CD4-positive, alpha-beta memory T cell (primary cell): ENCODE measurements at regions of chr19 and their contacts with region 1.

Region 1: DNA sequence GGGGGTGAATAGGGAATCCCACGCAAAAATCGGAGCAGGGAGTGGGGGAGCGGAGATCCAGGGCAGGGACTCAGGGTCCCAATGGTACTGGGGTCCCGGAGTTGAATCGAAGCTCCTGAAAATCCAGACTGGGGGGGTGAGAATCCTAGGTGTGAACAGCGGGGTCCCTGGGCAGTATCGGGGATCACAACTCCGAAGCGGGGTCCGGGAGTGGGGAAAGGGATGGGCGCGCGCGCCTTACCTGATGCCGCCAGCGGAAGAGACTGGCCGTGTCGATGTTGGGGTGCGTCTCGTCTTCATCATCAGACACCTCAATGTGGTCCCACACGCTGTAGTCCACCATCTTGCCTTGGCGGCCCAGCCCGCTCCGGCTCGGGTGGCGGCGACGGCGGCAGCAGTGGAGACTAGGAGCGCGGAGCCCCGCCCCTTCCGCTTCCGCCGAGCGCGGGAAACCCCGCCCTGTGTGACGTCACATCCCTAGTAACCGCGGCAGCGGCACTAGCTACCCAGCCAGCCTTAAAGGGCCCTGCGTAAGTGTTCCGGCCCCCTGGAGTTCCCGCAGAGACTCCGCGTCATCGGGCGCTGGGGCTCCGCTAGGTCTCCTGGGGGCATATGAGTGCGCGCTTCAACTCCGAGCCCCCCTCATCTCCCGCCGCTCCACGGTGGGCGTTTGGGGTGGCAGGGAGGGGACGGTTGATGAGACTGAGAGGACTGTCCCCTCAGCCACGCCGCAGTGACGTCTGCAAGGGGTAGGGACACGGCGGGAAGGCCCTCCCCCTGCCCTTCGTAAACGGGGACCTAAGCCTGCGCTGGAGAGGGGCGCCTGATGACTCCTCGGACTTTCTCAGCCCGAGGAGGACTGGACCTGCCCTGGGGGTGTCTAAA is at the start of gene CDC37:
- DNase-seq: peak; percentile 96 to 97 (median 97)
- H3K4me3 ChIP-seq: peak within 1 kb of the TSS; percentile 99 to 100
- H3K4me3 Mint-ChIP-seq: peak within 1 kb of the TSS; percentile 90 to 97 (median 96)
- H3K27ac ChIP-seq: peak within 1 kb of the TSS; percentile 92
- H3K27ac Mint-ChIP-seq: peak within 1 kb of the TSS; percentile 96 to 99 (median 98)
- H3K4me1 ChIP-seq: peaks cover 75% of the 10 kb centered on the region
- H3K4me1 Mint-ChIP-seq: peaks cover 37 to 86% (median 64%) of the 10 kb centered on the region in 4 donors
- H3K27me3 ChIP-seq: no peaks in the 10 kb centered on the region
- H3K27me3 Mint-ChIP-seq: peaks cover 0 to 2% of the 10 kb centered on the region in 2 donors
- total RNA-seq, gene CDC37: 180 to 185 TPM

Region 2: GRCh38 chr19:10259162-10259905 is 144.0 kb before region 1 on chr19:
- CTCF ChIA-PET with region 1: interaction called, 24 read pairs
- POLR2A ChIA-PET with region 1: no interaction called
- intact Hi-C with region 1: no loop called
- DNase-seq: peak; percentile 82 to 94 (median 86)
- H3K4me3 ChIP-seq: no peak overlapping the region
- H3K4me3 Mint-ChIP-seq: peak overlapping the region in 1 of 8 donors; percentile 68
- H3K27ac ChIP-seq: peak overlapping the region; percentile 16
- H3K27ac Mint-ChIP-seq: peak overlapping the region in 4 of 7 donors; percentile 17 to 76 (median 54)
- H3K4me1 ChIP-seq: peaks cover 20% of the 10 kb centered on the region
- H3K4me1 Mint-ChIP-seq: peaks cover 5 to 17% (median 8%) of the 10 kb centered on the region in 4 donors
- H3K27me3 ChIP-seq: no peaks in the 10 kb centered on the region
- H3K27me3 Mint-ChIP-seq: no peaks in the 10 kb centered on the region

Region 3: DNA sequence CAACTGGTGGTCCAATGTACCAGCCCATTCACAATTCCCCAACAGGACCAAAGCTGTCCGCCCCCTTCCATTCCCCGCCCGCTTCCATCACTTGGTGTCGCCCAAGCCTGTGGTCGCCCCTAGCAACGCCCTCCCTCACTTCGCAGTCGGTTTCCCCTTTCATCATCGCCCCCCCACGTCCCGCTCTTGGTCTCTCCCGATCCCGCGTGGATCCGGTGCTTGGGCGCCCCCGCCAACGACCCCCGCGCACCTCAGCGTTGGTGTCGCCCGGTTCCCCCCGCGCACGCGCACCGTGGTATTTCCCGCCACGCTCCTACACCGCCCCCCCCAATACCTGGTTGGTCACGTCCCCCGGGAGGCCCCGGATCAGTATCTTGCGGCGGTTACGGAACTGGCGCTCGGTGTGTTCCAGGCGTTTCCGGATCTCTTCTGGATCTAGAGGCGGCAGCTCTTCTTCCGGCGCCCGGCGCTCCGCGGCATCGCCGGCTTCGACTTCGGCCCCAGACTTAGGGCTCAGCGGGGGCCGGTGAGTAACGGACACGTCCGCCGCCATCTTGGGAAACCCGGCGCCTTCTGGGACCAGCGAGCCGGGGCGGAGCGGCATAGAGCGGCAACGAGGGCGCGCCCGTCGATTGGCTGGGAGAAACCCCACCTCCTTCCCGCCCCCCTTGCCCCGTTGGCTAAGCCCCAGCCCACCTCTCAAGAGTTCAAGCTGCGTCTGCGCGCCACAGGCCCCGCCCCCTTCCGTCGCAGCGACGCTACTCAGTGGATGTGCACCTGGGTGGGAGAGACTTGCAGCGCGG is 70.2 kb before region 1 on chr19 and contains the start of gene RAVER1:
- CTCF ChIA-PET with region 1: interaction called, 3 read pairs
- POLR2A ChIA-PET with region 1: interaction called, 7 read pairs
- intact Hi-C with region 1: loop called (anchors 1 kb)
- DNase-seq: peak; percentile 97 to 98 (median 98)
- H3K4me3 ChIP-seq: peak within 1 kb of the TSS; percentile 73 to 89
- H3K4me3 Mint-ChIP-seq: peak within 1 kb of the TSS; percentile 92 to 99 (median 96)
- H3K27ac ChIP-seq: peak within 1 kb of the TSS; percentile 88
- H3K27ac Mint-ChIP-seq: peak within 1 kb of the TSS; percentile 91 to 98 (median 97)
- H3K4me1 ChIP-seq: peaks cover 43% of the 10 kb centered on the region
- H3K4me1 Mint-ChIP-seq: peaks cover 7 to 57% (median 27%) of the 10 kb centered on the region in 4 donors
- H3K27me3 ChIP-seq: no peaks in the 10 kb centered on the region
- H3K27me3 Mint-ChIP-seq: no peaks in the 10 kb centered on the region
- total RNA-seq, gene RAVER1: 46.1 to 56.1 TPM

Region 4: GRCh38 chr19:10343495-10343894 is 59.9 kb before region 1 on chr19:
- CTCF ChIA-PET with region 1: no interaction called
- POLR2A ChIA-PET with region 1: no interaction called
- intact Hi-C with region 1: no loop called
- DNase-seq: no peak
- H3K4me3 ChIP-seq: no peak overlapping the region
- H3K4me3 Mint-ChIP-seq: no peak overlapping the region
- H3K27ac ChIP-seq: no peak overlapping the region
- H3K27ac Mint-ChIP-seq: no peak overlapping the region
- H3K4me1 ChIP-seq: peaks cover 16% of the 10 kb centered on the region
- H3K4me1 Mint-ChIP-seq: peaks cover 11 to 23% (median 16%) of the 10 kb centered on the region in 4 donors
- H3K27me3 ChIP-seq: no peaks in the 10 kb centered on the region
- H3K27me3 Mint-ChIP-seq: no peaks in the 10 kb centered on the region

Region 5: DNA sequence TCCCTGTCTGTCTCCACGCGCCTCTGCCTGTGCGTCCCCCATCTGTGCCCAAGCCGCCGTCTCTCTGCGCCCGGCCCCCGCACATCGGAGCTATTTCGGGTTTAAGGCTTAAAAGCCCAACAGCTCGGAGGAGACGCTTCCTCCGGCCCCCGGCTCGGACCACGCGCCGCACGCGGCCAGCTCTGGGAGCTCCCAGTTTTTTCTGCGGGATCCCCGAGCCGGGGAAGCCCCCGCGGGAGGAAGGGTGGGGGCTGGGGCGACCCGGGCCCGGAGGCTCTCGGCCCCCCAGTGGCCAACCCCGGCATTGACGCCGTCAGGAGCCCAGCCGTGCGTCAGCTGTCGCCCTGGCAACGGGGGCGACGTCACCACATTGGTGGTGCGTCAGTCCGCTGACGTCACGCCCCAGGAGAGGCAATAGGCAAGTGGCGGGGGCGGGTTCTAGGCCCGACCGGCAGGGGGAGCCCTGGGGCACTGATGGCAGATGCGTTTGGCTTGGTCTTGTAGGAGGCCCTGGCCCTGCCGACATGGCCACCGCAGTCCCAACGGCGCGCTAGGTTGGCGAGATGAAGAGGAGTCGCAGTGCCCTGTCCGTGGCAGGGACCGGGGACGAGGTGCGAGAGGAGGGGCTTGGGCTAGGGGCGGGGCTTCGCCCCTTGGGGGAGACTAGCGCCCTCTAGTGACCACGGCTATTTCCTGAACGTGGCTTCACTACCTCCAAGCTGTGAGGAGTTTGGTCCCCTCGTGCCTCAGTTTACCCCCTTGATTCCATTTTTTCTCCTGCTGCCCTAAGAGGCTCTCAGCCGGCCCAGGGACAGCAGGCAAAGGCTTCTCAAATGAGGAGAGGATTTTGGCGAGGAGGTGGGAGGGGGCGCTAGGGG is 13.2 kb after region 1 on chr19:
- CTCF ChIA-PET with region 1: interaction called, 379 read pairs
- POLR2A ChIA-PET with region 1: interaction called, 470 read pairs
- intact Hi-C with region 1: loop called (anchors 1 kb)
- DNase-seq: peak; percentile 97 to 99 (median 98)
- H3K4me3 ChIP-seq: peak overlapping the region in 1 of 2 donors; percentile 47
- H3K4me3 Mint-ChIP-seq: peak overlapping the region; percentile 65 to 85 (median 76)
- H3K27ac ChIP-seq: peak overlapping the region; percentile 49
- H3K27ac Mint-ChIP-seq: peak overlapping the region; percentile 87 to 99 (median 95)
- H3K4me1 ChIP-seq: peaks cover 72% of the 10 kb centered on the region
- H3K4me1 Mint-ChIP-seq: peaks cover 23 to 66% (median 46%) of the 10 kb centered on the region in 4 donors
- H3K27me3 ChIP-seq: peaks cover 43% of the 10 kb centered on the region
- H3K27me3 Mint-ChIP-seq: peaks cover 31 to 35% of the 10 kb centered on the region in 2 donors

Region 6: DNA sequence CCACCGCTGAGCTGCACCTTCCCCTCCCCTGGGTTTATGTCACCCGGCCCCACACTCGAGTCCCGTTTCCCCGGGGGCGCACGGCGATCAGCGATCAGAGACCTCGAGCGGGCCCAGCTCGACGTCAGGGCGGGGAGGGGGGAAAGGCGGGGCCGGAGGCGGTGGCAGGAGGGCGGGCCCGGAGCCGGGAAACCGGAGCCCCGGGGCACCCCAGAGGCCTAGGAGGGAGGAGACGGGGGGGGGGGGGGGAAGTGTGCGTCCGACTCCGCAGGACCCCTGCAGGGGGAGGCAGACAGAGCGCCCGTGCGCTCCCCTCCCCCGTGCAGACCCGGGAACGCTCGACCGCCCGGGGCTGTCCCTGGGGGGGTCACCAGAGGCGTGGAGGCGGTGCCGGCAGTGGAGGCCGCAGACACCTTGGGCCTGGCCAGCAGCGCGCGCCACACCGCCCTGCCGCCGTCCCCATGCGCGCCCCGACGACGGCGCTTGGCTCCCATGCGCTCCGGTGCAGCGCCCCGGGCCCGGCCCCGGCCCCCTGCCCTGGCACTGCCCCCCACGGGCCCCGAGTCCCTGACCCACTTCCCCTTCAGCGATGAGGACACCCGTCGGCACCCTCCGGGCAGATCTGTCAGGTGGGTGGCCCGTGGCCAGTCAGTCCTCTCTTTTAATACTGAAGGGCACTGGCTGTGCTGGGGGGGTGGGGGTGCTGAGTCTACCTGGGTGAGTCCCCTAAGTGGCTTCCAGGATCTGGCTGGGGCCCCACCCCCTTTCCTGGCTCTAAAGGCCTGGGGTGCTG is 28.8 kb after region 1 on chr19:
- CTCF ChIA-PET with region 1: interaction called, 379 read pairs
- POLR2A ChIA-PET with region 1: interaction called, 470 read pairs
- intact Hi-C with region 1: loop called (anchors 1 kb)
- DNase-seq: peak; percentile 61 to 82 (median 68)
- H3K4me3 ChIP-seq: peak overlapping the region in 1 of 2 donors; percentile 43
- H3K4me3 Mint-ChIP-seq: peak overlapping the region; percentile 83 to 96 (median 90)
- H3K27ac ChIP-seq: peak overlapping the region; percentile 50
- H3K27ac Mint-ChIP-seq: peak overlapping the region; percentile 94 to 99 (median 98)
- H3K4me1 ChIP-seq: peaks cover 50% of the 10 kb centered on the region
- H3K4me1 Mint-ChIP-seq: peaks cover 28 to 62% (median 44%) of the 10 kb centered on the region in 4 donors
- H3K27me3 ChIP-seq: no peaks in the 10 kb centered on the region
- H3K27me3 Mint-ChIP-seq: peaks cover 8 to 19% of the 10 kb centered on the region in 2 donors

Region 7: DNA sequence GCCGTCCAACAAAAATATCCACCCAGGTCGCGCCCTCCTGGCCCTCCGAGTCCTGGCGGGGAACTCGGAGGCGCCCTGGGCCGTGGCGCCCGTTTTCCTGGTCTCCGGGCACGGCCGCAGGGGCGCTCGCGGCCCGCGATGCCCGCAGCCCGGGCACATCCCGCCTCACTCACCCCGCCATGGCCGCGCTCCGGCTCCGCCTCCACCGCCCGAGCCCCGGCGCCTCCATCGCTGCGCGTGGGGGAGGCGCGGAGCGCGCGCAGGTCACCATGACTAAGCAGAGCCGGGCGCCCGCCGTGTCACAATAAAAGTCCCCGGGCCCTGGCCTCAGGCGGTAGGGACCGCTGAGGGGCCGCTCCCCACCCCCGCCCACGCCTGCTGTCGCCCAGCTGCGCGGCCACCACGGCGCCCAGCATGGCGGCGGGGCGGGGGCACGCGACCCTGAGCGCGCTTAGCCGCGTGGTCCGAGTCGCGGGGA is 99.2 kb after region 1 on chr19:
- CTCF ChIA-PET with region 1: no interaction called
- POLR2A ChIA-PET with region 1: interaction called, 3 read pairs
- intact Hi-C with region 1: loop called (anchors 2 kb)
- DNase-seq: peak; percentile 83 to 88 (median 87)
- H3K4me3 ChIP-seq: peak overlapping the region; percentile 50 to 97
- H3K4me3 Mint-ChIP-seq: peak overlapping the region; percentile 84 to 90 (median 88)
- H3K27ac ChIP-seq: peak overlapping the region; percentile 87
- H3K27ac Mint-ChIP-seq: peak overlapping the region; percentile 81 to 94 (median 90)
- H3K4me1 ChIP-seq: peaks cover 47% of the 10 kb centered on the region
- H3K4me1 Mint-ChIP-seq: peaks cover 21 to 49% (median 35%) of the 10 kb centered on the region in 4 donors
- H3K27me3 ChIP-seq: no peaks in the 10 kb centered on the region
- H3K27me3 Mint-ChIP-seq: no peaks in the 10 kb centered on the region

Region 8: DNA sequence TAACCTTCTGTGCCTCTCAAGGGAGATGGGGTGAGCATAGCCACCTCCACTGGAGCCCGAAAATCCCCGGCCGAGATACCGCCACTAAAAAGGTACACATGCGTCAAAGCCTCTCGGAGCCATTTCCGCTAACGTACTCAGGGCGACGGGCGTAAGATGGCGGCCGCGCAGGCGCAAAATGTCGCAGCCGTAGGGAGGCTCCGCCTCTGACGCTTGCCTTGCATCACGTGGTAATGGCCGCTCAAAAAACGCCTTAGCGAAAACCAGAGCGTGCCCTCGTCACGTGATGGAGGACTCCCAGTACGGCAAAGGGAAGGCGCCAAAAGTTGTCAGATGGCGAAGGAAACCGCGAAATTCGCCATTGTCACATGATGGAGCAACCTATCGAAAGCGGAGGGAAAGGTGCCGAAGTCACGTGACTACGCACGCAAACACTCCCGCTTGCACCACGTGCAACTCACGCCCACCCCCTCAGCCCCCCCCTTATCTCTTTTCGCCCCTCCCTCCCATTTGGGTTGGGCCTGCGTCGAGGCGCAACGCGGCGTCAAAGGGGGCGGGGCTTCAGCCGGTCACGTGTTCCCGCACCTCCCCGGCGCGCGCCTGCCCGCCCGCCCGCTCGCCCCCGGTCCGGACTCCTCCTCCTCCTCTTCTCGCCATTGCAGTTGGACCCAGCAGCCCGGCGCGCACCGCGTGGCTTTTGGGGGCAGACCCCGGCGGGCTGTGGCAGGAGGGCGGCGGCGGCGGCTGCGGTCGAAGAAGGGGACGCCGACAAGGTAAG is 250.5 kb after region 1 on chr19 and contains the start of gene ILF3:
- CTCF ChIA-PET with region 1: no interaction called
- POLR2A ChIA-PET with region 1: no interaction called
- intact Hi-C with region 1: loop called (anchors 1 kb)
- DNase-seq: peak; percentile 100
- H3K4me3 ChIP-seq: peak within 1 kb of the TSS; percentile 92 to 94
- H3K4me3 Mint-ChIP-seq: peak within 1 kb of the TSS; percentile 93 to 98 (median 96)
- H3K27ac ChIP-seq: peak within 1 kb of the TSS; percentile 100
- H3K27ac Mint-ChIP-seq: peak within 1 kb of the TSS; percentile 98 to 100 (median 99)
- H3K4me1 ChIP-seq: peaks cover 57% of the 10 kb centered on the region
- H3K4me1 Mint-ChIP-seq: peaks cover 24 to 58% (median 39%) of the 10 kb centered on the region in 4 donors
- H3K27me3 ChIP-seq: no peaks in the 10 kb centered on the region
- H3K27me3 Mint-ChIP-seq: peaks cover 0 to 4% of the 10 kb centered on the region in 2 donors
- total RNA-seq, gene ILF3: 291 to 302 TPM